ENCODE measurements at regions of chr14 and their contacts with region 1.

Region 1: GRCh38 chr14:81436296-81437138 is 36.4 kb upstream of the STON2 start:
- DNase-seq: peak in 1 of 2 experiments; percentile 87
- H3K4me3 ChIP-seq: peak overlapping the region; percentile 50 to 86 (median 75)
- H3K27ac ChIP-seq: no peak overlapping the region
- H3K4me1 ChIP-seq: peaks cover 7 to 16% (median 13%) of the 10 kb centered on the region in 4 experiments
- H3K27me3 ChIP-seq: peaks cover 1 to 14% (median 9%) of the 10 kb centered on the region in 4 experiments; a peak in 6 of 7 replicates
- CTCF ChIP-seq: no peak
- EP300 ChIP-seq: no peak
- POLR2A ChIP-seq: no peak
- RAD21 ChIP-seq: no peak

Region 2: DNA sequence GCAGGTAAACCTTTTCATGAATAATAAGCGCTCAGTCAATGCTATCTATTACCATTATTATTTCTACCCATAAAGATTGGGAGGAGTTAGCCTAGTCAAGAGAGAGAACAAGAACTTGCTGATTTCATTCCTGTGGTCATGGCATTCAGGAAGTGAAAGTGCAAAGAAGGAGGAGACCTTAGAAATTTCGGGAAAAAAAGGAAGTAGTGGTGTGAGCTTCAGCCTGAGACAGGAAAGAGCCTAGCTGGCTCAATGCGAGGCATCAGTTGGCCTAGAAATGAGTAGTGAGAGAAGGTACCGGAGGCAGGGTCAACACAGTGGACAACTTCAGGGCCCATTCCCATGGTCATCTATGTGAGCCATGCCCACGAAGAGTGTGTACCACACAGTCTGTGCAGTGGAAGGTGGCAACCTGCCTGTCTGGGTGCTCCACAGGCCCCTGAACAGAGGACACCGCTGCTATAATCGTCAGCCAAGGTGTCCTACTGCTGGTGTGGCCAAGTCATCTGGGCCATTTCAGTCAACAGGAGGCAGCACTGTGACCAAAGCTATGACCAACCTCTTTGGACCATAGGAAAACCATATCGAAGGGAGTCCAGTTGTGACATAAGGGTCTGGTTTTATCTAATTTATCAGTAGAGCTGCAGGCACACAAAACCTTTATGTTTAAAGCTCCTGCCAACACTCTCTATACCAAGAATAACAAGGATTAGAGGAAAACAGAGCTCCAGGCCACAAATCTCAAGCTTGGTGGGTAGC is 20.1 kb before region 1 on chr14:
- CTCF ChIA-PET with region 1: interaction called, 12 read pairs
- POLR2A ChIA-PET with region 1: interaction called, 3 read pairs
- DNase-seq: no peak
- H3K4me3 ChIP-seq: no peak overlapping the region
- H3K27ac ChIP-seq: no peak overlapping the region
- H3K4me1 ChIP-seq: no peaks in the 10 kb centered on the region
- H3K27me3 ChIP-seq: no peaks in the 10 kb centered on the region
- CTCF ChIP-seq: no peak
- EP300 ChIP-seq: no peak
- POLR2A ChIP-seq: no peak
- RAD21 ChIP-seq: no peak

Region 3: DNA sequence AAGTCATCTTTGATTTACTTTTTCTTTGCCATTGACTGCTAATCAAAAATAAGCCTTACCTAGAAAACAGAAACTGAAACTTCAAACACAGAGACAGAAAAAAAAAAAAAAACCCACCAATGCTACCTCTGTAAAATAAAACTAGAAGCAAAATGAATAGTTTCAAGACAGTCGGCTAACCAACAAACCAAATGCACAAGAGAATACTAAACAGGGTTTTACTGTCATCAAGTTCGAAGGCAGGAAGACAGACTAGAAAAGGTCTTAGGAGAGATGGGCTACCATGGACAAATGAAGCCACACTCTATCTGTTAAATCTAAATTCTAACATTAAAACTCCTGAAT is 37.6 kb after region 1 on chr14:
- CTCF ChIA-PET with region 1: no interaction called
- POLR2A ChIA-PET with region 1: no interaction called
- DNase-seq: no peak
- H3K4me3 ChIP-seq: no peak overlapping the region
- H3K27ac ChIP-seq: no peak overlapping the region
- H3K4me1 ChIP-seq: no peaks in the 10 kb centered on the region
- H3K27me3 ChIP-seq: no peaks in the 10 kb centered on the region
- CTCF ChIP-seq: no peak
- EP300 ChIP-seq: no peak
- POLR2A ChIP-seq: no peak
- RAD21 ChIP-seq: no peak